Natural killer cell (primary cell): ENCODE measurements at regions of chr1 and their contacts with region 1.

Region 1: DNA sequence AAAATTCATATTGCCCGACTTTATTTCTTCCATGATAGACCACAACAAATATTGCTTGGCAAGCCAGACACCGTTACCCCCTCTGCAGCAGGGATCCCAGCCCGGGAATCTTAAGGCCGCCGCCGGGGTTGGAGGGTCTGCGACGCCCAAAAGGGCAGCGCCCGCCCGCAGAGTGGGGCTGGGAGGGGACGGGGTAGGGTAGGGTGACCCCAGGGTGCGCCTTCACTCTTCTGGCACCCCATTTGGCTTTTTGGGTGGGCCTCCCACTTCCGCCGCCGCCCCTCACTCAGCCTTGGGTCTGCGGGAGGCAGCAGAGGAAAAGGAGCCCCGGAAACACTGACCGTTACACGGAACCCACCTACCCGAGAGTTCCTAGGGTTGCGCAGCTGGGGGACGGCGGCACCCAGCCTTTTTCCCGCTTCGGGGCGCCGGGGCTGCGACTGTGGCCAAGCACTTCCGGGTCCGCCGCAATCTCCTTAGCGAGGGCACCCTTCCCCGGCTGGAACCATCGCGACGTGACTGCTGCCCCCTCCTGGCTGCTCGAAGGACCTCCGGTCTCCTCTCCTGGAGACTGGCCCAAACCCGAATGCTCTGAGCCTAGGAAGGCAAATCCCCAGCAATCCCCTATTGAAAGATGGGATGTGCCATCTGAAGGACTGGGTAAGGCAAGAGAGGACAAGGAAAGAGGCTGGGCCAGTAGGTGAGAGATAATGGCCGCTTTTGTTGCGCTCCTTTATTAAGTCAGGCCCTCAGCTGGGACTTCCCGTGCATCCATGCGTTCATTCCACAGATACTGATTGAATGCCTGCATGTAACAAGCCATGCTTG is at the start of gene PIGC:
- DNase-seq: peak; percentile 86 to 96
- ATAC-seq: peak; percentile 99 to 100 (median 99)
- H3K4me3 ChIP-seq: peak within 1 kb of the TSS; percentile 89
- H3K4me3 Mint-ChIP-seq: peak within 1 kb of the TSS; percentile 96
- H3K27ac ChIP-seq: peak within 1 kb of the TSS; percentile 83
- H3K27ac Mint-ChIP-seq: peak within 1 kb of the TSS; percentile 90 to 94
- H3K4me1 ChIP-seq: peaks cover 5% of the 10 kb centered on the region
- H3K4me1 Mint-ChIP-seq: peaks cover 45 to 52% of the 10 kb centered on the region in 2 donors
- H3K27me3 ChIP-seq: no peaks in the 10 kb centered on the region
- H3K27me3 Mint-ChIP-seq: no peaks in the 10 kb centered on the region
- CTCF ChIP-seq: peak; percentile 72
- total RNA-seq, gene PIGC: 27.9 to 35.7 (median 30.4) TPM

Region 2: DNA sequence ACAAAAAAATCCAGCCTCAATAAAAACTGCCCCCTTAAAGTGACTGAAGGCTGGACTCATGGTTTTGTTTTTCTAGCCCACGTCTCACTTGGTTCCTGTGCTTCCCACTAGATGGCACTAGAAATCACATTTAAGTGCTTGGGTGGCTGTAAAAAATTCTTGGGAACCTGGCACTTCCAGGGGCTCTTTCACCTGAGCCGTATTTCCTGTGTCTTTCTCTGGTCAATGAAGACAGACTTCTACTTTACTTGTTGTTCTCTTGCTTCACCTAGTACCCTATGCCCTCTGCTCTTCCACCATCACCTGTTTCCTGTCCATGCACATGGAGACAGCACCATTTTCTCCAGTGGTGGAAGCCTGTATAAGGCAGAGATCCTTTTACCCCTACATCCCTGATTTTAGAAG is 642.4 kb before region 1 on chr1:
- intact Hi-C with region 1: loop called (anchors 5 kb)
- DNase-seq: peak in 1 of 2 donors; percentile 58
- ATAC-seq: no peak
- H3K4me3 ChIP-seq: no peak overlapping the region
- H3K4me3 Mint-ChIP-seq: no peak overlapping the region
- H3K27ac ChIP-seq: no peak overlapping the region
- H3K27ac Mint-ChIP-seq: no peak overlapping the region
- H3K4me1 ChIP-seq: peaks cover 13% of the 10 kb centered on the region
- H3K4me1 Mint-ChIP-seq: peaks cover 16 to 17% of the 10 kb centered on the region in 2 donors
- H3K27me3 ChIP-seq: no peaks in the 10 kb centered on the region
- H3K27me3 Mint-ChIP-seq: no peaks in the 10 kb centered on the region
- CTCF ChIP-seq: peak; percentile 75

Region 3: GRCh38 chr1:172002725-172003345 is 441.0 kb before region 1 on chr1:
- intact Hi-C with region 1: loop called (anchors 1 kb)
- DNase-seq: peak in 1 of 2 donors; percentile 68
- ATAC-seq: peak in 1 of 3 donors; percentile 49
- H3K4me3 ChIP-seq: no peak overlapping the region
- H3K4me3 Mint-ChIP-seq: no peak overlapping the region
- H3K27ac ChIP-seq: no peak overlapping the region
- H3K27ac Mint-ChIP-seq: no peak overlapping the region
- H3K4me1 ChIP-seq: no peaks in the 10 kb centered on the region
- H3K4me1 Mint-ChIP-seq: peaks cover 0 to 8% of the 10 kb centered on the region in 2 donors
- H3K27me3 ChIP-seq: no peaks in the 10 kb centered on the region
- H3K27me3 Mint-ChIP-seq: no peaks in the 10 kb centered on the region
- CTCF ChIP-seq: peak; percentile 55

Region 4: DNA sequence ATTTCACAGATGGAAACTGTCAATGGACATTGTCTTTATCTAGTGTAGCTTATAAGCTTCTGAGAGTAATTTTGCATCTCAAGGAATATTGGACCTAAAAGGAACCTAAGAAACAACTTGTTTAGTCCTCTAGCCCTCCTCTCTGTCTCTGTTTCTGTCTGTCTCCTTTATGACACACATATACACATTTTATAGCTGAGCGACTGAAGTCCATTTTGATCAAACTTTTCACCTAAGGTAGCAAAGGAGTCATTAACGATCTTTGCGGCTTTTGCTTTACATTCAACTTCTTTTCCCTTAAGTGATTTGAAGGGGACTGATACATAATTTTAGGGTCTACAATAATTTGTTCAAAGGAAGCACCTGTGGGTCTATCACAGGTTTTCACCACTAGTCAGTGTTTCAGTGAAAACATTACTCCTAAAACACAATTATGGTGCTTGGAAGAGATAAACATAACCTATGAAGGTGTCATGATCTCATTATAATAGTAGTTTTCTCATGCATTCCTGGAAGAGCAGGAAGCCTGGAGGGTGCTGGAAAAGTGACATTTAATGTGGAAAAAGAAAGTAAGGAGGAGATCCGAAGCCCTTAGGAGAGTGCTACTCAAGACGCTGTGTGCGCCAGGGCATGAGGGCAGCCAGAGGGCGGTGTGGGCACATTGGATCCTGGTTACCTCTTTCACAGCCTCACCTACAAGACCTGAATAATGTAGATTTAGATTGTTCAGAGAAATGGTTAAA is 353.9 kb before region 1 on chr1:
- intact Hi-C with region 1: loop called (anchors 1 kb)
- DNase-seq: peak in 1 of 2 donors; percentile 79
- ATAC-seq: peak in 2 of 3 donors; percentile 59 to 72
- H3K4me3 ChIP-seq: no peak overlapping the region
- H3K4me3 Mint-ChIP-seq: no peak overlapping the region
- H3K27ac ChIP-seq: no peak overlapping the region
- H3K27ac Mint-ChIP-seq: no peak overlapping the region
- H3K4me1 ChIP-seq: no peaks in the 10 kb centered on the region
- H3K4me1 Mint-ChIP-seq: peaks cover 6% of the 10 kb centered on the region in 2 donors
- H3K27me3 ChIP-seq: no peaks in the 10 kb centered on the region
- H3K27me3 Mint-ChIP-seq: peaks cover 6 to 8% of the 10 kb centered on the region in 2 donors
- CTCF ChIP-seq: peak; percentile 54

Region 5: GRCh38 chr1:172135076-172135672 is 308.7 kb before region 1 on chr1:
- intact Hi-C with region 1: loop called (anchors 1 kb)
- DNase-seq: peak in 1 of 2 donors; percentile 69
- ATAC-seq: peak in 2 of 3 donors; percentile 69 to 72
- H3K4me3 ChIP-seq: no peak overlapping the region
- H3K4me3 Mint-ChIP-seq: no peak overlapping the region
- H3K27ac ChIP-seq: no peak overlapping the region
- H3K27ac Mint-ChIP-seq: peak overlapping the region in 1 of 2 donors; percentile 11
- H3K4me1 ChIP-seq: no peaks in the 10 kb centered on the region
- H3K4me1 Mint-ChIP-seq: peaks cover 0 to 7% of the 10 kb centered on the region in 2 donors
- H3K27me3 ChIP-seq: no peaks in the 10 kb centered on the region
- H3K27me3 Mint-ChIP-seq: peaks cover 0 to 3% of the 10 kb centered on the region in 2 donors
- CTCF ChIP-seq: peak; percentile 81

Region 6: DNA sequence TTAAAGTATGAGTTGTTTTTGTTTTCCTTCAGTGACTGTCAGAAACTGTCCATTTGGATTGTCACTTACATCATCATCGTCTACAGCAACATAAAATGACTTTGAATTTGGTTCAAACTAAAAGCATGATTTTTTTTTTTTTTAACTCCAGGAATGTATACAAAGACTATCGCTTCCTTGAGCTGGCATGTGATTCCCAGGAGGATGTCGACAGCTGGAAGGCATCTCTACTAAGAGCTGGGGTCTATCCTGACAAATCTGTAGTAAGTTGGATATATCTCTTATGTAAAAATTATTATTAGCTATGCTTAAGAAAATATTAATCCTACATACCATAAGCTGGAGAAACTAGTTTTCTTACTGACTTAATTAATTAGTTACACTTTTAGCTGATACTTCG is 135.3 kb before region 1 on chr1:
- intact Hi-C with region 1: no loop called
- DNase-seq: no peak
- ATAC-seq: no peak
- H3K4me3 ChIP-seq: no peak overlapping the region
- H3K4me3 Mint-ChIP-seq: no peak overlapping the region
- H3K27ac ChIP-seq: no peak overlapping the region
- H3K27ac Mint-ChIP-seq: no peak overlapping the region
- H3K4me1 ChIP-seq: no peaks in the 10 kb centered on the region
- H3K4me1 Mint-ChIP-seq: no peaks in the 10 kb centered on the region
- H3K27me3 ChIP-seq: no peaks in the 10 kb centered on the region
- H3K27me3 Mint-ChIP-seq: no peaks in the 10 kb centered on the region
- CTCF ChIP-seq: no peak

Region 7: DNA sequence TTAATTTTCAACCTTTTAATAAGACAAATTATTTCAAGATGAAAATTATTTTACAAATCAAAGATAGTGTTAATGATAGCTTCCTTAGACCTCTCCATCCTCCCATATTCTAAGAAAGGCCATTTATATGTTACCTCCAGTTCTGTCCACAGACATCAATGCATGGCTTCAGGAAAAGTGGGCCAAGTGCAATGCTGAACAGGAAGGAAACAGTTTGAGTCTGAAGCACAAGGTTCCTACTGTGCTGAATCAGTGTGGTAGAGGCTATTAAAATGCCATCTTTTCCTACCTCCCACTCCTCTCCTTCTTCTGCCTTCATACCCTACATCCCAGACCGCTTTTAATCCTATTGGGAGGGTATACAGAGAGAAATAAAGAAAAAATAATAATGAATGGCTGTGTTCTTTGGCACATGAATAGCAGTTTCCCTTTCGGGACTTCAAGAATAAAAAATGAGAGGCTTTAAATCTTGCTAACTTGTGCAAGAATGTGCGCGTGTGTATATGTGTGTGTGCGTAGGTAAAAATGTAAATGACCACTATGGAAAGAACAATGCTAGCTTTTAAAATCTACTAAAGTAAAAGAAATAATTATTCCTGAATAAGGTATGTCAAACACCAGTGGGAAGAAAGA is 86.0 kb before region 1 on chr1:
- intact Hi-C with region 1: loop called (anchors 5 kb)
- DNase-seq: peak in 1 of 2 donors; percentile 40
- ATAC-seq: peak; percentile 16 to 41 (median 27)
- H3K4me3 ChIP-seq: no peak overlapping the region
- H3K4me3 Mint-ChIP-seq: peak overlapping the region; percentile 81
- H3K27ac ChIP-seq: peak overlapping the region; percentile 82
- H3K27ac Mint-ChIP-seq: peak overlapping the region; percentile 89 to 90
- H3K4me1 ChIP-seq: peaks cover 20% of the 10 kb centered on the region
- H3K4me1 Mint-ChIP-seq: peaks cover 41 to 50% of the 10 kb centered on the region in 2 donors
- H3K27me3 ChIP-seq: no peaks in the 10 kb centered on the region
- H3K27me3 Mint-ChIP-seq: no peaks in the 10 kb centered on the region
- CTCF ChIP-seq: no peak

Region 8: DNA sequence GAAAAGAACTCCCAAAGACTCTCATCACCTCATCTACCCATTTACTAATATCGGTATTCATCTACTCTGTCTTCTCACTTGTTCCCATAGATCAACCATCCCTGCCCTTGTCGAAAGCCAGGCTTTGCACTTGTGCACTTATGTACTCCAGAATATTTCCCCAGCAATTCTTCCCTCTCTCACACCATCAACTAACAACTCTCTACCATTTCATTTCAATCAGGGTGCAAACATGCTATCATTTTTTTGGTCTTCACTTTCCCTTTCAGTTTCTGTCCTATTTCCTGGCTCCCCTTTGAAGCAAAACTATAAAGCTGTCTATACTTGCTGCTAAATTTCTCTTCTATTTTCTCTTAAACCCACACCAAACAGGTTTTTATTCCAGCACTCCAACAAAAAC is 16.6 kb before region 1 on chr1:
- intact Hi-C with region 1: loop called (anchors 1 kb)
- DNase-seq: peak in 1 of 2 donors; percentile 50
- ATAC-seq: peak; percentile 50 to 70 (median 56)
- H3K4me3 ChIP-seq: no peak overlapping the region
- H3K4me3 Mint-ChIP-seq: no peak overlapping the region
- H3K27ac ChIP-seq: peak overlapping the region; percentile 51
- H3K27ac Mint-ChIP-seq: no peak overlapping the region
- H3K4me1 ChIP-seq: peaks cover 3% of the 10 kb centered on the region
- H3K4me1 Mint-ChIP-seq: no peaks in the 10 kb centered on the region
- H3K27me3 ChIP-seq: no peaks in the 10 kb centered on the region
- H3K27me3 Mint-ChIP-seq: no peaks in the 10 kb centered on the region
- CTCF ChIP-seq: no peak